Right ventricle myocardium inferior (tissue), 1 donor: ENCODE measurements at regions of chr2 and their contacts with region 1.

Region 1: DNA sequence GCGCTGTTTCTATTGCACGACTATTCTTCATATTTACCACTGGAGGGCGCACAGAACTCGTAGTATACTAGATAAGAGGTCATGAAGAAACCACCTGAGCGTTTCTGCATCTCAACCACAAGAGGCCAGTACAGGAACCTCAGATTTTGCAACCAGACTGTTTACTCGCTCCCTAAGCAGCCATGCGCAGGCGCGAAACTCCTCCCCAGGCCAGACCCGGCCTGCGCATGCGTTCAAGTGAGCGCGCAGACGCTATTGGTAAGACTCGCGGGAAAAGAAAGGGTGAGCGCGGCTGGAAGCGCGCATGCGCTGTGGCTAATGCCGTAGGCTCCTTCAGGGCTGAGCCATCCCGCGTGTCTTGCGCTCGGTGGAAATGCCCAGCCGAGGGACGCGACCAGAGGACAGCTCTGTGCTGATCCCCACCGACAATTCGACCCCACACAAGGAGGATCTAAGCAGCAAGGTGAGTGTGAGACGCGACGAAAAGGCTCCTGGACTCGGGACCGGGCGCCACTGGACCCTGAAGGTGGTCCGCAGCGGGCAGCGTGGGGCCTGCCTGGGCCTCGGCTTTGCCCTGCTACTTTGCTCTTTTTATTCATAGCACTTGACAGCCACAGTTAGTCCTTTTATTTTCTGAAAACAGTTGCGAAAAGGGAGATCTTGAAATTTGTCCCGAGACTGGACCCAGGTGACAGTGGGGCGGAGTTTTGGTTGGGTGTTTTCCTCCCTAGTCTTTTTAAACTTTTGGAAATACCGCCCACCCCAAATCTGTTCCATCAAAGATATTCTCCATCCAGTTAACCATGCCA is at the start of gene ASNSD1:
- DNase-seq: peak; percentile 100
- ATAC-seq: peak; percentile 97
- total RNA-seq, gene ASNSD1: 35.2 TPM

Region 2: DNA sequence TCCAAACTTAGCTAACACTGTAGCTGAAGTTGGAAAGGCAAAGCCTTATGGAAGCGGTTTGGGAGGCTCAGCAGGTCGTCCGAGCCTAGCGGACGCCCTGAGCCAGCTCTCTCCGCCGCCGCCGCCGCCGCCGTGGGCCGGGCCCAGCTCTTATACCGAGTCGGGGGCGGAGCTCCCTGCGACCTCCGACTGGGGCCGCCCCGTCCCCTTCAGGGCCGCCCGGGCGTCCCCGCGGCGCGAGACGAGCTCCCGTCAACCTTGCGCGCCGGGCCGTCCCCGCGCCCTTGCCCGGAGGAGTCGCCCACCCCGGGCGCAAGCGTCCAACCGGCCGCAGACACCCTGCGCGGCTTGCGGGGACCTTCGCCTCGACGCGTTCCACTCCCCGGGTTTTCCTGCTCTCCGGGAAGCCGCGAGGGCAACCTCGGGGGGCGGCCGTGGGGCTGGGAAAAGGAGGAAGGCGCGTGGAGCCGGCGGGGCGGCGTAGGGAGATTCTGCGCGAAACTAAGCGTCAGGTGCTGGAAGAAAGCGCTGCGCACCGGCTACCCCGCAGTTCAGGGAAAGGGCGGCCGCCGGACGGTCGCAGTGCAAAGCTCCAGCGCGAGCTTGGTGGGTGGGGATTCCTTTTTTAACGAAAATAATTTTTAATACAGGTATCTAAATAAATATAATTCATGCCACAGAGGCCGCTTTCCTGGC is 80.5 kb before region 1 on chr2 and contains the start of gene SLC40A1:
- intact Hi-C with region 1: no loop called
- DNase-seq: peak; percentile 93
- ATAC-seq: peak; percentile 98
- total RNA-seq, gene SLC40A1: 51.0 TPM

Region 3: GRCh38 chr2:189698020-189698887 is 36.9 kb after region 1 on chr2:
- intact Hi-C with region 1: loop called (anchors 1 kb)
- DNase-seq: no peak
- ATAC-seq: peak; percentile 54

Region 4: DNA sequence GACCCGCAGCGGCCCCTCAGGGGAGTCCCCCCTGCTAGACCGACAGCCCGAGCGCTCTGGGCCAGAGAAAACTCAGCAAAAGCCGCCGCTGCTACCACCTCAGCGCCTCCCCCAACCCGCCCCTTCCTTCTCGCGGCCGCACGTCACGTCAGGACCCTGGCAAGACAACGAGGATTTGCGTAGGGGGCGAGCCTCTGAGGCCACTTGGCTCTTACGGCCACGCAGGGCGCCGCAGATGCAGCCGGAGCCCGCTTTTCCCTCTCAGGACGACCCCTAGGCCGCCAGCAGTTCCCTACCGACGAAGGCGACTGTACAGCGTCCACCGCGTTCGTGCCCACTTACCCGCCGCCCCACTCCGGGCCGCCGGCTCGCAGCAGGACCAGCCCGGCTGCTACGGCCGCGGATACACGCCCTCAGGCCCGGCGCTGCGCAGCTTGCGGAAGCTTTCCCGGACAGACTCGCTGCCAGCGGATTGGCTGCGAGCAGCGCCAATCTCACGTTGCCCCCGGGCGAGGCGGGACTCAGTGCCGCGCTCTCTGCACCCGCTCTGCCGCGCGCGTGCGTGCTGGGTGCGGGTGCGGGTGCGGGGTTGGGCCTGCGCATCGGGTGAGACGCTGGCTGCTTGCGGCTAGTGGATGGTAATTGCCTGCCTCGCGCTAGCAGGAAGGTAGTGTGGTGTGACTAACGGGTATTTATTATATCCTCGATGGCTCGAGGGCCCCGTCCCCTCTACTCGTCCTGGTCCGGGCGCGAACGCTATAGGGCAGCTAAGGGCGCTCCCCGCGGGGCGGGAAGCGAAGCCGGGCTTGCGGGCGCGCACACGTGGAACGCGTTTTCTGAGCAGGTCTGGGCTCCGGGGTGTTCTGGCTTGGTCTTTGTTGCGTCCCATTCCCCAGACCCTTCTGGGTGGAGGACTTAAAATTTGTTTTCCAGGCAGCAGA is 122.8 kb after region 1 on chr2 and contains the starts of genes ORMDL1 and PMS1:
- intact Hi-C with region 1: loop called (anchors 5 kb)
- DNase-seq: peak; percentile 99
- ATAC-seq: peak; percentile 99
- total RNA-seq, gene ORMDL1: 21.9 TPM
- total RNA-seq, gene PMS1: 15.1 TPM

Region 5: DNA sequence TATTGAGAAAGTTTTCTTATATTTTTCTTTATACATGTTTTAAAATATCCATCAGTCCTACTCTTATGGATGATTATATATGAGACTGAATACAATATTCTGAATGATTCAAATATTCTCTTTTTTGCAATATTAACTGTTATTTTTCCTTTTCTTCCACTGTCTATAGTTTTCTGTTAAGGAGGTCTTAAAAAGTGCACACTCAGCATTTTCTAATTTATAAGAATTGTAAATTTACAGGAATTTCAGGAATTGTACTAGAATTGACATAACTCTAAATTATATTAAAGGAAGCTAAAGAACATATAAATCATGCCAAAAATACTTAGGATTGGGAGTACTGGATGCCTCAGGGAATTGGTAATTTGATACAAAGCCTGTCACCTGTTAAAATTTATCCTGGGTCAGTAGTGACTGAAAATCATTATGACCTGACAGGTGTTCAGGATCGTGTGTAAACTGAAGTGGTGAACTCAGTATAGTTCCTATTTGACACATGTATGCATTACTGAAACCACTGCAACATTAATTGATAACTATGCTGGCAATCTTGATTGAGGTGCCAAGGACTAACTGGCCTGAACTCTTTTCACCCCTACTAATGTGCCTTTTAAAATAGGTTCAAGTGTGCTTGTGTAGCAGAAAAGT is 370.7 kb after region 1 on chr2:
- intact Hi-C with region 1: no loop called
- DNase-seq: no peak
- ATAC-seq: no peak

Region 6: GRCh38 chr2:190069936-190070696 is 408.8 kb after region 1 on chr2:
- intact Hi-C with region 1: loop called (anchors 2 kb)
- DNase-seq: no peak
- ATAC-seq: no peak